Activated CD4-positive, alpha-beta T cell treated with anti-CD3 and anti-CD28 coated beads, Interleukin-2, amount 10 ng/mL, durations not matched to agents 24 days and 14 days (primary cell): ENCODE measurements at regions of chr3 and their contacts with region 1.

Region 1: GRCh38 chr3:196179380-196180308 is 31.6 kb downstream of the ZDHHC19 start:
- DNase-seq: peak; percentile 95
- H3K4me3 Mint-ChIP-seq: peak overlapping the region; percentile 70
- H3K27ac Mint-ChIP-seq: peak overlapping the region; percentile 97
- H3K4me1 Mint-ChIP-seq: peaks cover 50% of the 10 kb centered on the region
- H3K27me3 Mint-ChIP-seq: no peaks in the 10 kb centered on the region

Region 2: DNA sequence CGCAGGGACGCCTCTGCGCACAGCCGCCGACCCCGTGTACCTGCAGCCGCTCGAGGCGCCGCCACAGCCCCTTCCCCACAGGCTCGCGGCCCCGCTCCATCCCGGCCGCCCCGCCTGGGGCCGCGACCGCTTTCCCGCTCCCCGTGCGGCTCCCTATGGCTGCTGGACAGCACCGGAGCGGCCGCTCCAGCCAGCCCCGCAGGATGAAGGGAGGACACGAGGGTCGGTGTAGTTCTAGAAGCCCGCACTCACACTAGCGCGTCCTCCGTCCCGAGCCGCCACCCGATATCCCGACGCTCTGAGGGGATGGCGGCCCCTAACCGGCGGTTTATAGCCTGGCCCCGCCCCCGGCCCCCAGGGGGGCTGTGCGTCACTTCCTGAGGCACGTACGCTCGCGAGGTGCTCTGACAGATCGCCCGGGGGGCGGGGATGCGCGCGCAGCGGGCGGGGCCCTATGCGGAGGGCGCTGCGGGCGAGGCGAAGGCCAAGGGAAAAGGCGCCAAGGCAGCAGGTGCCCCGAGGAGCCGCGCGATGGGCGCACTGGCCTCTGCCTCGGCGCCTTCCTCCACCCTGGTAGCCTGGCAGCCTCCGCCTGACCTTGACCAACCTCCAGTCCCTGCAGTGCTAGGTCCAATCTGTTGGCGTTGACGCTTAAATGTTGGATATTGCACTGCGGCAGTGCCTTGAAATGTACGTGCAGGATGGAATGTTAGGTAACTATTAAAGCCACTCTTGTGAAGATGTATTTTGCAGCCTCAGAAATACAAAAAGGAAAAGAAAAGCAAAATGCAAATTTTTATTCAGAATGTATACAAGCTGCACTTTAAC is 97.6 kb before region 1 on chr3 and contains the start of gene TFRC:
- intact Hi-C with region 1: loop called (anchors 1 kb)
- DNase-seq: peak; percentile 99
- H3K4me3 Mint-ChIP-seq: peak within 1 kb of the TSS; percentile 89
- H3K27ac Mint-ChIP-seq: peak within 1 kb of the TSS; percentile 92
- H3K4me1 Mint-ChIP-seq: peaks cover 34% of the 10 kb centered on the region
- H3K27me3 Mint-ChIP-seq: no peaks in the 10 kb centered on the region
- total RNA-seq, gene TFRC: 725 and 748 TPM in 2 replicates

Region 3: GRCh38 chr3:196111939-196112386 is 67.7 kb before region 1 on chr3:
- intact Hi-C with region 1: loop called (anchors 1 kb)
- DNase-seq: peak; percentile 85
- H3K4me3 Mint-ChIP-seq: peak overlapping the region; percentile 72
- H3K27ac Mint-ChIP-seq: peak overlapping the region; percentile 99
- H3K4me1 Mint-ChIP-seq: peaks cover 19% of the 10 kb centered on the region
- H3K27me3 Mint-ChIP-seq: no peaks in the 10 kb centered on the region

Region 4: GRCh38 chr3:196292291-196292923 is 112.8 kb after region 1 on chr3:
- intact Hi-C with region 1: no loop called
- DNase-seq: no peak
- H3K4me3 Mint-ChIP-seq: no peak overlapping the region
- H3K27ac Mint-ChIP-seq: no peak overlapping the region
- H3K4me1 Mint-ChIP-seq: peaks cover 9% of the 10 kb centered on the region
- H3K27me3 Mint-ChIP-seq: no peaks in the 10 kb centered on the region

Region 5: DNA sequence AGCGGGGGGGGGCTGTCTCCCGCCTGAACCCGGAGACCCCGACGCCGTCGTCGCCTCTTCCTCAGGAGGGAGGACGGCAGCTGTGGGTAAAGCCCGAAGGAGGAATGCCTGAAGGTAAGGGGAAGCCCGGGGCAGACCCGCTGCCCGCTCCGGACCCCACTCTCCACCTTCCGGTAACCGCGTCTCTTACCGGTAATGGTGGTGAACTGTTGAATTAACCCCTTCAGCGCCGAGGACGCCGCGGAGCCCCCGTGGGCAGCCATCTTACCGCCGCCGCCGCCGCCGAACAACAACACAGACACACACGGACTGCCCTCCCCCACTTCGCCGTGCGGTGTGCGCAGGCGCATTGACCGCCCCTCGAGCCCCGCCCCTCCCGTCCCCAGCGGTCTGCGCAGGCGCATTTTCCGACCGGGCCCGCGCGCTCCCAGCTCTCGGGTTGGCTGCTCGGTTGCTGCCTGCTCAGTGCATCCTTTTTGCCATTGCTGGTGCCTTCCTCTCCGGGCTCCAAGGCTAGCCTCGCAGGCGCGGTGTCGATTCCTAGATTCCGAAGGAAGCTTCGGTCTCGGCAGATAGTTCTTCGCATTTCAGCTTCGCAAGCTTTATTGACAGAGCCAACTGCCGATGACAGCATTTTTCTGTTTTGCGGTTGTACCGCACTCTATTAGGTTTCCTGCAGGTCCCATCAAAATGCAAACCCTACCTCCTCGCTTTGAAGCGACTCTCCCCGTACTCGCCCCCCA is 252.7 kb after region 1 on chr3 and contains the start of gene UBXN7:
- intact Hi-C with region 1: loop called (anchors 1 kb)
- DNase-seq: peak; percentile 98
- H3K4me3 Mint-ChIP-seq: peak within 1 kb of the TSS; percentile 85
- H3K27ac Mint-ChIP-seq: peak within 1 kb of the TSS; percentile 97
- H3K4me1 Mint-ChIP-seq: peaks cover 20% of the 10 kb centered on the region
- H3K27me3 Mint-ChIP-seq: no peaks in the 10 kb centered on the region
- total RNA-seq, gene UBXN7: 65.5 and 70.8 TPM in 2 replicates